Lower lobe of right lung (tissue), 2 donors: ENCODE measurements at regions of chr9 and their contacts with region 1.

Region 1: DNA sequence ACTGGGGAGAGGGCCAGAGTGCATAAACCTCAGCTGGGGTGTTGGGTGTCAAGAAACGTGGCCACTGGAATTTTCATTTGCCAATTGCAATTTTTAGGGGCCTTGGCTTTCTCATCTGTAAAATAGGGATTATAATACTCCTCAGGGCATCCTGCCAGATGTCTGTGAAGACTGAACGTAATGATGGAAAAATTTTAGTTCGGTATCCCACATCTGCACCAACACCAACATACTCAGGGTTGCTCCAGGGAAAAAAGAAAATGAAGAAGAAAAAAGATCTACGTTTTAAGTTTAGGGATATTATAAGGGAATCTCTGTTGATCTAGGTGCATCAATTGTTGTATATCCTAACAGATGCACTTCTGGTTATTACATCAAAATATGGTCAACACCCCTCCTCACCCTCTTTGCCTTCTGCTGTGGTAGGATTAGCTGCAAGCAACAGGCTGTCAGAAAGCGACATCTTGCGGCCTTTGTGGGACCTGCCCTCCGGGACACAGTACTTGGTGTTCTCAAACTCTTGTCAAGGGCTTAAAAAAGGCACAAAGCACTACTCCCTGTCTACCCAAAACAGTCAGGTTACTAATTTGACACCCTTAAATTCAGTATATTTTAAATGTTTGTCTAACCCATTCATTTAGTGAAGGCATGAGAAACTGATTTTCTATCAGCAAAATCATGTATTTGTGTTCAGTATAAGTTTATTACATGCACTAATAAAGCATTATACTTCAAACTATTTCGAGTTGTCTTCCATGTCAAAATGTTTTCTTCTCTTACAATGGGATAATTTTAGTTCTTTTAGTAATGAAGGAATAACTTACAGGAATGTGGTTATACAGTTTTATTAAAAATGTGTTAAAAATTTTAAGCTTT is 8.3 kb upstream of the TBC1D2 start:
- DNase-seq: peak; percentile 83
- ATAC-seq: peak; percentile 95 to 99
- H3K4me3 ChIP-seq: no peak overlapping the region
- H3K27ac ChIP-seq: no peak overlapping the region
- H3K4me1 ChIP-seq: no peaks in the 10 kb centered on the region
- H3K27me3 ChIP-seq: no peaks in the 10 kb centered on the region
- CTCF ChIP-seq: peak; percentile 95

Region 2: GRCh38 chr9:98207606-98208005 is 56.1 kb before region 1 on chr9:
- intact Hi-C with region 1: loop called (anchors 10 kb)
- DNase-seq: no peak
- ATAC-seq: no peak
- H3K4me3 ChIP-seq: no peak overlapping the region
- H3K27ac ChIP-seq: no peak overlapping the region
- H3K4me1 ChIP-seq: peaks cover 8% of the 10 kb centered on the region
- H3K27me3 ChIP-seq: no peaks in the 10 kb centered on the region
- CTCF ChIP-seq: no peak